ENCODE measurements at regions of chr15 and their contacts with region 1.

Region 1: DNA sequence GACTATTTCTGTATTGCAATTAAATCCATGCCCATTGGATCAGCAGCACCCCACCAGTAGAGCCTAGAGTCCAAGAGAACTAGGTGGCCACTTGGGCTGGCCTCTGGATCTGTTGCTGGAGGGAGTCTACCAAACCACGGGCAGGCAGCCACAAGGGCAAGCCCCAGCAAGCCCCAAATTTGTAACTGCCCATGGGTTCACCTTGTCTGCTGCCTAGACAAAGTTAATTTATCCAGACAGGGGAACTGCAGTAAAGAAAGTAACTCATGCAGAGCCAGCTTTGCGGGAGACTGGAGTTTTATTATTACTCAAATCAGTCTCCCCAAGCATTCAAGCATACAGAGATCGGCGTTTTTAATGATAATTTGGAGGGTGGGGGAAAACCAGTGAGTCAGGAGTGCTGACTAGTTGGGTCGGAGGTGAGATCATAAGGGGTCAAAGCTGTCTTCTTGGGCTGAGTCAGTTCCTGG is 74.0 kb upstream of the TERB2 start:
- DNase-seq: no peak
- ATAC-seq: no peak
- H3K4me3 ChIP-seq: no peak overlapping the region
- H3K4me3 Mint-ChIP-seq: no peak overlapping the region
- H3K27ac ChIP-seq: no peak overlapping the region
- H3K27ac Mint-ChIP-seq: no peak overlapping the region
- H3K4me1 ChIP-seq: no peaks in the 10 kb centered on the region
- H3K4me1 Mint-ChIP-seq: peaks cover 14% of the 10 kb centered on the region
- H3K27me3 ChIP-seq: peaks cover 0 to 3% (median 0%) of the 10 kb centered on the region in 4 experiments
- H3K27me3 Mint-ChIP-seq: no peaks in the 10 kb centered on the region
- CTCF ChIP-seq: no peak

Region 2: GRCh38 chr15:45009046-45009445 is 126.5 kb after region 1 on chr15:
- CTCF ChIA-PET with region 1: no interaction called
- POLR2A ChIA-PET with region 1: no interaction called
- intact Hi-C with region 1: no loop called
- DNase-seq: no peak
- ATAC-seq: no peak
- H3K4me3 ChIP-seq: no peak overlapping the region
- H3K4me3 Mint-ChIP-seq: no peak overlapping the region
- H3K27ac ChIP-seq: no peak overlapping the region
- H3K27ac Mint-ChIP-seq: no peak overlapping the region
- H3K4me1 ChIP-seq: no peaks in the 10 kb centered on the region
- H3K4me1 Mint-ChIP-seq: no peaks in the 10 kb centered on the region
- H3K27me3 ChIP-seq: no peaks in the 10 kb centered on the region
- H3K27me3 Mint-ChIP-seq: peaks cover 7% of the 10 kb centered on the region
- CTCF ChIP-seq: no peak

Region 3: GRCh38 chr15:45157974-45158373 is 275.4 kb after region 1 on chr15:
- CTCF ChIA-PET with region 1: no interaction called
- POLR2A ChIA-PET with region 1: interaction called, 11 read pairs
- intact Hi-C with region 1: no loop called
- DNase-seq: no peak
- ATAC-seq: no peak
- H3K4me3 ChIP-seq: no peak overlapping the region
- H3K4me3 Mint-ChIP-seq: no peak overlapping the region
- H3K27ac ChIP-seq: no peak overlapping the region
- H3K27ac Mint-ChIP-seq: no peak overlapping the region
- H3K4me1 ChIP-seq: peaks cover 0 to 5% of the 10 kb centered on the region in 2 donors
- H3K4me1 Mint-ChIP-seq: peaks cover 1% of the 10 kb centered on the region
- H3K27me3 ChIP-seq: no peaks in the 10 kb centered on the region
- H3K27me3 Mint-ChIP-seq: no peaks in the 10 kb centered on the region
- CTCF ChIP-seq: no peak